ENCODE measurements at regions of chr11 and their contacts with region 1.

Region 1: GRCh38 chr11:118592616-118593367 is 14.6 kb upstream of the PHLDB1 start:
- DNase-seq: no peak
- ATAC-seq: peak; percentile 60

Region 2: GRCh38 chr11:118610804-118611795 is 18.3 kb after region 1 on chr11:
- intact Hi-C with region 1: loop called (anchors 2 kb)
- DNase-seq: peak; percentile 89
- ATAC-seq: peak; percentile 42

Measured in Right ventricle myocardium inferior (tissue), 1 donor.